Aorta (tissue), 5 donors: ENCODE measurements at regions of chrX and their contacts with region 1.

Region 1: GRCh38 chrX:23907498-23908218 is at the starts of genes APOO and CXorf58:
- DNase-seq: peak; percentile 95 to 96
- ATAC-seq: peak; percentile 98
- H3K4me3 ChIP-seq: peak within 1 kb of the TSS; percentile 2 to 53
- H3K27ac ChIP-seq: peak within 1 kb of the TSS; percentile 44 to 49
- H3K4me1 ChIP-seq: no peaks in the 10 kb centered on the region
- H3K27me3 ChIP-seq: no peaks in the 10 kb centered on the region
- total RNA-seq, gene APOO: 5.6 to 12.7 TPM
- total RNA-seq, gene CXorf58: not detected

Region 2: DNA sequence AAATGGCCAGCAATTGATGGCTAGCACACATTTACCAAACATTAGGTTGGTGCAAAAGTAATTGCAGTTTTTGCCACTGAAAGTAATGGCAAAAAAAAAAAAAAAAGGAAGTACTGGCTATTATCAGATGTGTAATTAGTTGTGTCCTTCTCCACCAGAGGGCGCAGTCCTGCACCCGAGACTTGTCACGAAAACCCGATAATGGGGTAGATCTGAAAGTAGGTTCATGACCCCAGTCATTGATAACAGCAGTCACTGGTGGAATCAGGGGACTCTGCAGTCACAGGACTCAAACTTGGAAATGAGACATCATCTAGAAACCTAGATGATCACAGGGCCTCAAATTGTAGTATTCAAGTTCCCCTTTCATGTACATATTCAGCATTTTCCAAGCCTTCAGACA is 151.5 kb before region 1 on chrX:
- intact Hi-C with region 1: loop called in 1 of 2 experiments (anchors 10 kb)
- DNase-seq: peak in 1 of 2 donors; percentile 69
- ATAC-seq: no peak
- H3K4me3 ChIP-seq: no peak overlapping the region
- H3K27ac ChIP-seq: no peak overlapping the region
- H3K4me1 ChIP-seq: no peaks in the 10 kb centered on the region
- H3K27me3 ChIP-seq: no peaks in the 10 kb centered on the region

Region 3: DNA sequence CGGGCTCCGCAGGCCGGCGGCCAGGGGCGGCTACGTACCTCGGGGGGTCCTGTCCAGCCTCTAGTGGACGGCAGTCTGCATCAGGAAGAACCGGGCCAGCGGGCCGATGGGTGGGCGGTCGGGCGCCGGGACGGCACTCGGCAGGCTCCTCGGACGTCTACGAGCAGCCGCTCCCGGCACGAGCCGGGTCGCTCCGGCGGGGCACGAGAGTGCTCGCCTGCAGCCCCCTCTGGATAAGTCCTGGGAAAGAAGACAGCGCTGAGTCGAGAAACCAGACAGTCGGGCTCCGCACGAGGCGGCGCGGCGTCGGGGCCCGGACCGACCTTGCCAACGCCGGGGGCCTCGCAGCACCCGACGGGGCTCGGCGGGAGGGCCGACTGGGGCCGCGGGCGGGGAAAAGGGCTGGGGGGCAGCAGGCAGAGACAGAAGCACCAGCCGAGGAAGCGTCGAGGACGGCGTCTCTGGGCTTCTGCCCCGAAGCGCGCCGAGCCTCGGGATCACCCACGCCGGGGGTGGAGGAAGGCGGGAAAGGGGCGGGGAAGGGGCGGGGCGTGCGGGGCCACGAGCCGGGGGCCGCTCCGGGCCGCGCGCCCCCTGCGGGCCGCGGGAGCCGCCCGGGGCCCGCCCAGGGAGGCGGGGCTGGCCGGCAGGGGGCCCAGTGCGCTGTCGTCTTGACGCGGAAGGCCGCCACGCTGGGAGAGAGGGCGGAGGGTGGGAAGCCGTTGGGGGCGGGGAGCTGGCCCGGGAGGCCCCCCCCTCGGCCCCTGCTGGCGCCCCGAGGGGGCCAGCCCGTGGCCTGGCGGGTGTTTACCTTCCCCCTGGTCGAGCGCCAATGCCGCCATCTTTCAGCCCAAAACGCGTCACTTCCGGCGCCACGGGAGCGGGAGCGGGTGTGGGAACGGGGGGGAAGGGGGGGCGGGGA is 117.4 kb after region 1 on chrX:
- intact Hi-C with region 1: loop called (anchors 2 to 10 kb)
- DNase-seq: peak; percentile 92 to 95
- ATAC-seq: peak; percentile 94
- H3K4me3 ChIP-seq: peak overlapping the region; percentile 29 to 35
- H3K27ac ChIP-seq: peak overlapping the region in 1 of 2 donors; percentile 64
- H3K4me1 ChIP-seq: no peaks in the 10 kb centered on the region
- H3K27me3 ChIP-seq: peaks cover 0 to 2% of the 10 kb centered on the region in 2 donors